Heart right ventricle (tissue), 16 donors: ENCODE measurements at regions of chr10 and their contacts with region 1.

Region 1: DNA sequence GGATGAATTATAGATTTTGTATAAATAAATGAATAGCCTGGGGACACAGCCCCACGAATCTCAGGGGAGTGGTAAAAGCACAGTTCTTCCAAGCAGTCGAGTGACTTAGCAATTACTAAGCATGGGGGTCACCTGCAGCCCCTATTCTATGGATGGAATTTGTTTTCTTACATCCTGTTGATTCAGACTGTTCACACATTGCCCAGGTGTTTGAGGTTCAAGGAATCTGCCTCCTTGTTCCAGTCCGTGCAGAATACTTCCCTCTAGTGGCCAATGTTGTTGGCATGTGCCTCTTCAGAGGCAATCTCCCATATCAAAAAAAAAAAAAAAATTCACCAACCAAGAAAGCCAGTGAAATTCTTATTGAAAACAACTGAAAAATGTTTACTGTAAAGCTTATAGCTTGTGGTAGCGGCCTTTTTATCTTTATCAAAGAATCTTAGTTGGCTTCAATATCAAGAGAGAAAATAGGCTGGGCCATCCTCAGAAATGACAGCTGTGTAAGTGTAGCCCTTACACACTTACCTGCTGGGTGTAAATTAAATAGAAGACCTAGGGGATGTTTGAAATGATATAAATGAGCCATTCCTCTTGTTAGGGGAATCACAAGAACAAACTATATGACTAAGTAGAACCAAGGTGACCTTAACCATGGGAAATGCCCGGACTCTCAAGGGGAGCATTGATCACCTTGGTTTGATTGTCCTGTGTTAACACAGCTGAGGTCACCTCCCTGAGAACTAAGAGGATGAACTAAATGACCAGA is 7.8 kb downstream of the LIPM start:
- DNase-seq: no peak
- ATAC-seq: peak in 3 of 8 donors; percentile 39 to 60 (median 52)
- H3K4me3 ChIP-seq: no peak overlapping the region
- H3K27ac ChIP-seq: no peak overlapping the region
- H3K4me1 ChIP-seq: no peaks in the 10 kb centered on the region
- H3K27me3 ChIP-seq: peaks cover 0 to 23% (median 4%) of the 10 kb centered on the region in 7 donors
- CTCF ChIP-seq: peak; percentile 17 to 77 (median 60)

Region 2: GRCh38 chr10:88565072-88565471 is 245.3 kb before region 1 on chr10:
- intact Hi-C with region 1: loop called in 2 of 10 experiments (anchors 2 to 5 kb)
- DNase-seq: no peak
- ATAC-seq: no peak
- H3K4me3 ChIP-seq: no peak overlapping the region
- H3K27ac ChIP-seq: no peak overlapping the region
- H3K4me1 ChIP-seq: no peaks in the 10 kb centered on the region
- H3K27me3 ChIP-seq: no peaks in the 10 kb centered on the region
- CTCF ChIP-seq: peak in 8 of 9 donors; percentile 5 to 57 (median 42)

Region 3: DNA sequence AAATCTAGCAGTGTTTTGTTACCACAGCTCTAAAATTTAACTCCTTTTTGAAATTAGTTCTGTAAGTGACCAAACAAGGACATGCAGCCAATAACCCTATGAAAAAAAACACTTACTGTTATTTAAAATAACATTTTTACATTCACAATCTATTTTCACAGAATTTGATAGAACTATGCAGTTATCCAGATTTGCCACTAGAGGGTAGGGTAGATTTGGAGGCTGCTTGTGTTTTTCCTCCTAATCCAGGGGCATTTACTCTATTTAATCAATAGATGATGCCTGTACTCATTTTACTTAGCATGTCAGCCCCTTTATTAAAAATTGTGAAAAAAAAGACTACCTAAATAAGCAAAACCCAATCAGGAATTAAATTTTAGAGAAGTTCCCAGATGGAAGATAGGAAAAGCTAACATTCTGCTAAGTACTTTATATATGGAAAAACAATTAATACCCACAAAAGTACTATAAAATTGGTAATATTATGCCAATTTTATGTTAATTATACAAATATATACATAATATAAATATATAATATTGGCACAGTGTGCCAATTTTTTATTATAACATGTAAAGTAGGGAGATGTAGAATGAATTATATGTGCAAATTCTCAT is 122.4 kb before region 1 on chr10:
- intact Hi-C with region 1: loop called in 3 of 10 experiments (anchors 5 kb)
- DNase-seq: no peak
- ATAC-seq: no peak
- H3K4me3 ChIP-seq: no peak overlapping the region
- H3K27ac ChIP-seq: no peak overlapping the region
- H3K4me1 ChIP-seq: no peaks in the 10 kb centered on the region
- H3K27me3 ChIP-seq: peaks cover 0 to 14% (median 0%) of the 10 kb centered on the region in 7 donors
- CTCF ChIP-seq: peak; percentile 34 to 81 (median 65)